Cardiac septum (tissue), 1 donor: ENCODE measurements at regions of chr22 and their contacts with region 1.

Region 1: DNA sequence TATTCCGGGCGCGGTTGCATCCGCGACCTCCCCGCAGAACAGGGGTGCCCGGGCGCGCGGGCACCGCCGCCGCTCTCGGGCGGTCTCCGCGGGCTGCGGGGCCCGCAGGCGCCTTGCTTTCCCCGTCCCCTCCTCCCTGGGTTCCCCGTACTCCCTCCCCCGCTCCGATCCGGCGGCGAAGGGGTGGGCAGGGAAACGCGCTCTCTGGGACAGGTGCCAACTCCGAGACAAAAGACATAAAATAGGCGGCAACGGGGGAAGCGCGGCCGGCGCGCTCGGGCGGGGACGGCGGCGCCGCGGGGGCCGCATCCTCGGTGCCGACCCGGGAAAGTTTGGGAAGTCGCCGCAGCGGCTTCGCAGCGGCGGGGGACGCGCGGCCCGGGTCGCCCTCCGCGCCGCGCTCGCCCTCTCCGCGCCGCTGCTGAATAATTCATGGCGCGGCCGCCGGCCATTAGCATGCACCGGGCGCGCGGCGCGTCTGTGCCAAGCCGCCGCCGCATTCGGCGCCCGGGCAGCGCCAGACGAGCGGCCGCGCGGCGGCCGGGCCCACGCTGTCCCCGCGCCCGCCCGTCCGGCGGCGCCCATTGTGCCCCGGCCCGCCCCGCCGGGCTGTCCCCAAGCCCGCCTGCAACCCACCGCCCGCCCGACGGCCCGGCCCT is 78.7 kb upstream of the PPARA start:
- DNase-seq: peak; percentile 95

Region 2: GRCh38 chr22:46013460-46014416 is 57.8 kb before region 1 on chr22:
- intact Hi-C with region 1: loop called (anchors 5 kb)
- DNase-seq: peak; percentile 96

Region 3: DNA sequence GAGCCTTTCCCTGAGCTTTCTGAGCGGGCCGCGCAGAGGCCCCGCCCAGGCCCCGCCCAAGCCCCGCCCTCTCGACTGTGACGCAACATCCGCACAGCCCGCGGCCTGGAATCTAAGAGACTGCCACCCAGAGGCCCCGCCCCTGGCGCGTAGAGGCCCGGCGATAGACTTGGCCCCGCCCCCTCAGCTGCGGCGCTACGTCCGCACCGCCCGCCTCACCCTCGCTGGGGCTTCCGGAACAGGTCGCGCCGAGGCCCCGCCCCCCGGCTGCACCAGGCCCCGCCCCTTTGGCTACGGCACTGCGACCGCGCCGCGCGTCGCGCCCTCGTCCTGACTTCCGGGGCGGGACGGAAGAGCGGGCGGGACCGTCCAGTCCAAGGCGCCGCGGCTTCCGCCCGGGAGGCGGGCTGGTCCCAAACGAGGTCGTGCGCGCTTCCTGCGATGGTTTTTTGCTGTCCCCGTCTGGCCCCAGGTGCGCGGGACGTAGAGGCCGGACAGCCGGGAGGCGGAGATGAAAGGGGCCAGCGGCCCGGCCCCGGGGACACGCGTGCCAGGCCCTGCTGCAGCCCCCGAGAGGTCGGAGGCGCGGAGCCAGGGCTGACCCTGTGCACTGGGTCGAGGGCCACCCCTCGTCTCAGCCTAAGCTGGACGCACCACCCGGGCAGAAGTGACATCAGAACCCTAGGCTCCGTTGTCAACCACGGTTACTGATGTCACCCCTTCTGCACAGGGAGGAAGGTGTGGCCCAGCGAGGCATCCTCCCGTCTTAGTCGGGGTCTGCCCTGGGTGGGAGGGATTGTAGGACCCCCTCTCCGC is 35.6 kb before region 1 on chr22:
- intact Hi-C with region 1: loop called (anchors 2 kb)
- DNase-seq: peak; percentile 100

Region 4: DNA sequence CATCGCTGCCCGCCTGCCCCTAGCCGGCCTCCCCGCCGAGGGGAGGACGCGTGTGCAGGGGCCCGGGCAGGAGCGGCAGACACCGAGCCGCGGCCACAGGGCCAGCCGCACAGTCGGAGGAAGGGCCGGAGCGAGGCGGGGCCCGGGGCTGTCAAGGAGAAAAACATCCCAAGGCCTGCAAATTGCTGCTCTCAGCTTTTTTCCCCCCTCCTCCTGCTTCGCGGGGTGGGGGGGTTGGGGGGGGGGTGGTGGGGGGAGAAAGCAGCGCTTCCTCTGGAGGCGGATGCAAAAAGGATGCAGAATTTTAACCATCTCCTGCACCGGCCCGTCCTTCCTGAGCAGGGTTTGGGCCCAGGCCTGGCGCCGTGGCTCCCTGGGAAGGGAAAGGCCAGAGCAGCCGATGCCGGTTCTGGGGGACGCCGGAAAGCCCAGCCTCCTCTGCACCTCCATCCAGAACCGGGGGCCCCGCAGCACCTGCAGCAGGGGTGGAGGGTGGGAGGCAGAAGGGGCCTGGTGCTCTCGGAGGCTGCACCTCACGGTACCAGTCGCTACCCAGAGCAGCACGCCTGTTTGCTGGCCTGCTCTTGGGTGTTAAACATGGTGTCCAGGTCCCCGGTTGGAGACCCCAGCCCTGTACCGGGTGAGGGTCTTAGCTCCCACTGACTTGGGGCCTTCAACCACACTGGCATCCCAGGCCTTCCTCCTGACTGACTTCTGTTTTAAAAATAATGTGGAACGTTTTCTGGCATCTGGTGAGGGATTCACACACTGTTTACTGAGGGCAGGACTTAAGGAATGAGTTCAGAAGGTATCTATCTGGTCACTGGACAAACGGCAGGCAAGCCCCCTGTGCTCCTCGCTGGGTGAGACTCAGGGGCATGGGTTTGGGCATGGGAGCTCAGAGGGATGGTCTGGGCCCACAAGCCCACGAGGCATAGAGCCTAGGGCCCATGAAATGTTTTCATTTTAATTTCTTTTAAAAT is 17.2 kb before region 1 on chr22:
- intact Hi-C with region 1: loop called (anchors 2 kb)
- DNase-seq: peak; percentile 85

Region 5: GRCh38 chr22:46108564-46109473 is 37.2 kb after region 1 on chr22:
- intact Hi-C with region 1: loop called (anchors 5 kb)
- DNase-seq: no peak